ENCODE measurements at regions of chr17 and their contacts with region 1.

Region 1: GRCh38 chr17:32755045-32755805 is 121.7 kb downstream of the MYO1D start:
- DNase-seq: no peak
- H3K4me3 ChIP-seq: no peak overlapping the region
- H3K27ac ChIP-seq: no peak overlapping the region
- H3K4me1 ChIP-seq: no peaks in the 10 kb centered on the region
- H3K27me3 ChIP-seq: no peaks in the 10 kb centered on the region
- CTCF ChIP-seq: peak; percentile 30

Region 2: GRCh38 chr17:32486111-32486700 is 269.0 kb before region 1 on chr17:
- intact Hi-C with region 1: loop called (anchors 10 kb)
- DNase-seq: peak; percentile 70
- H3K4me3 ChIP-seq: peak overlapping the region; percentile 32
- H3K27ac ChIP-seq: no peak overlapping the region
- H3K4me1 ChIP-seq: no peaks in the 10 kb centered on the region
- H3K27me3 ChIP-seq: no peaks in the 10 kb centered on the region
- CTCF ChIP-seq: no peak

Region 3: GRCh38 chr17:32627239-32627996 is 127.8 kb before region 1 on chr17:
- intact Hi-C with region 1: no loop called
- DNase-seq: no peak
- H3K4me3 ChIP-seq: no peak overlapping the region
- H3K27ac ChIP-seq: no peak overlapping the region
- H3K4me1 ChIP-seq: no peaks in the 10 kb centered on the region
- H3K27me3 ChIP-seq: no peaks in the 10 kb centered on the region
- CTCF ChIP-seq: no peak

Region 4: DNA sequence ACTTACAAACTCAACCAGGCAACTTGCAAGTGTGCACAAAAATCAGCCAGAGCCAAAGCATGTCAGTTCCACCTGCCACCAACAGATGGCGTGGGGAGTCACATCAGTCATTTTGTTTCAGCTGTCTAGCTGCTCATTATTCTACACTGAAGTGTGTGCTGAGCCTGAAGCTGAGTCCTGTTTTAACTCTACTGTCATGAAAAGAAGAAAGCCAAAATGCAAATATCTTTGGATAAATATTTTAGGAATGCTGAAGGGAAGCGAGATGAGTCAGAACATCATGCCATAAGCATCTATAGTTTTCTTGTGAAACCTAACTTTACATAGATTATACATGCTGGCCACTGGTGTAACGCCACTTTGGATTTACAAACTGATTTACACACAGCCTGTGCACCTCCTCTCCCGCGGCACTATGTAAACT is 95.8 kb before region 1 on chr17:
- intact Hi-C with region 1: loop called (anchors 5 kb)
- DNase-seq: peak; percentile 73
- H3K4me3 ChIP-seq: no peak overlapping the region
- H3K27ac ChIP-seq: no peak overlapping the region
- H3K4me1 ChIP-seq: no peaks in the 10 kb centered on the region
- H3K27me3 ChIP-seq: no peaks in the 10 kb centered on the region
- CTCF ChIP-seq: peak; percentile 93